ENCODE measurements at regions of chr3 and their contacts with region 1.

Region 1: DNA sequence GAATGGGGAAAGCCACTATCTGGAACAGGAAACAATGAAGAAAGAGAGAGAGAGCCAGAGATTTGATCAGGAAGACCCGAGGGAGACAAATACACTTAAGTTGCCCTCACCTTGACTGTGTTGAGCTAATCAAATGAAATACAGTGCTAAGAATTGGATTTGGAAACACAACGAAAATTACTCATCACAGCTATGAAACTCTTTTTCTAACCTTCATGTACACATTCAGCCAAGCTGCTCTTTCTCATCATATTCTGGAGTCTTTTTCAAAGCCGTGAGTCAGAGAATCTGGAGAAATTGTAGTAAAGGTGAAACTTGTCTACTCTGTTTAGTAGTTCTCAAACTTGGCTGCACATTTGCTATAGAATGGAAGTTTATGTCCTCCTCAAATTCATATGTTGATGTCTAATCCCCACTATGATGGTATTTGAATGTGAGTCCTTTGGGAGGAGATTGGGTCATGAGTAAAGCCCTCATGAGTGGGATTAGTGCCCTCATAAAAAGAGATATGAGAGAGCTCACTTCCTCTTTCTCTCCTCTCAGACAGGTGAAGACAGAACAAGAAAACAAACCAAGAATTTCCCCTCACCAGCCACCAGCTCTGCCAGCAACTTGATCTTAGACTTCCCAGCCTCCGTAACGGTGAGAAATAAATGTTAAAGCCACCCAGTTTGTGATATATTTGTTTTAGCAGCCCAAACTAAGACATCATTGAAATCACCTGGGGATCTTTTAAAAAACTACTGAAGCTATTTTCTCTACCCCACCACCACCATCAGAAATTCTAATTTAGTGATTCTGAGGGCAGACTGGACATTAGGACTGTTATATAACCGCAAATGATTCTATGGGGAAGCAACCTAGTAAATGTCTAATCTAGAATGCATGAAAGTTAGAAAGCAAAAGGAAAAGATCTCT is 143.6 kb upstream of the GRM7 start:
- DNase-seq: peak; percentile 91
- H3K4me3 ChIP-seq: peak overlapping the region; percentile 57
- H3K27ac ChIP-seq: peak overlapping the region; percentile 94
- H3K4me1 ChIP-seq: peaks cover 39% of the 10 kb centered on the region
- CTCF ChIP-seq: no peak

Region 2: GRCh38 chr3:6282918-6283317 is 434.4 kb before region 1 on chr3:
- CTCF ChIA-PET with region 1: no interaction called
- POLR2A ChIA-PET with region 1: no interaction called
- intact Hi-C with region 1: loop called (anchors 5 kb)
- DNase-seq: peak; percentile 41
- H3K4me3 ChIP-seq: no peak overlapping the region
- H3K27ac ChIP-seq: peak overlapping the region; percentile 79
- H3K4me1 ChIP-seq: peaks cover 63% of the 10 kb centered on the region
- CTCF ChIP-seq: no peak

Region 3: DNA sequence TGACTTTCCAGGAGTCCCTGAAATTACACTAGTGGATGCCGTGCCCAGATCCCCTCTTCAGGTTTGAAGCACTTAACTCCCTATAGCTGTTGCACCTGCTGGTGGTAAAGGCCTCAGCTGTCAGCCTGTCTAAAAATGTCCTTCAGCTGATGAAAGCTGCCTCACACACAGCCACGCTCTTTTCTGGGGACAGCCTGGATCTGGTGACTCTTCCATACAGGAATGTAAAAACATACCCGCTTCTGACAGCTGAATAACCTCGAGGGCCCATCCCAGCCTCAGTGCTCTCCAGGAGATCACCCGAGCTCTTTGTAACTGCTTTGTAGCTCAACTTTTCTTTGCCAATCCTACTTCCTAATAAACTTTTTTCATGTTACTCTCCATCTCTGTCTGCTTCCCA is 390.5 kb before region 1 on chr3:
- CTCF ChIA-PET with region 1: no interaction called
- POLR2A ChIA-PET with region 1: no interaction called
- intact Hi-C with region 1: no loop called
- DNase-seq: no peak
- H3K4me3 ChIP-seq: no peak overlapping the region
- H3K27ac ChIP-seq: no peak overlapping the region
- H3K4me1 ChIP-seq: no peaks in the 10 kb centered on the region
- CTCF ChIP-seq: no peak

Region 4: DNA sequence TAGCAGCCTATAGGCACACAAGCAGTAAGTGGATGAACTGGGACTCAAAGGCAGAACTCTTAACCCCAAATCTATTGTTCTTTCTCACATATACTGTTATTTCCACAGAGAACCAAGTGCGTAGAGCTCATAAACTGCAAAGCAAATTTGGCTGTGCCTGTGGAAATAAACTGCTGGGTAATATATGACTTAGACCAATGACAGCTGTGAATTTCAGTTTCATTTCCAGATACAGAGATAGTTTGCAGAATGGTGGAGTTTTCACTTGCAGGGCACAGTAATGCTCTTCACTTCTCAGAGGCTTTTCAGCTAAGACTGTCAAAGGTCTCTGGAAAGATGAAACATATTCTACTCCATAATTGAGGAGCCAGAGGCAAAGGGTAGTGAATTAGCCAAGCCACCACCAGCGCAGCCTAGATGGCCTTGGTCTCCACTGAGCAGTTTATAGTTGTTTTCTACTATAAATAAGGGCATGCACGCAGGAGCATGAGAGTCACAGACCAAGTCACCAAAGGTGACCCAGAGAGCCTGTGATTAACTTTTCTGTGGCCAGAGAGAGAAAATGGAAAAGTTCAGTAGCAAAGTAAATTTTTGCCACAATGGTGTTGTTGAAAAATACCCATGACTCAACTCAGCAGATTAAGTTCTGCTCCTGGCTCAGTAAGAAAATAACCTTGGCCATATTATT is 37.0 kb before region 1 on chr3:
- CTCF ChIA-PET with region 1: no interaction called
- POLR2A ChIA-PET with region 1: interaction called, 6 read pairs
- intact Hi-C with region 1: loop called (anchors 1 kb)
- DNase-seq: peak; percentile 77
- H3K4me3 ChIP-seq: peak overlapping the region; percentile 46
- H3K27ac ChIP-seq: peak overlapping the region; percentile 74
- H3K4me1 ChIP-seq: peaks cover 28% of the 10 kb centered on the region
- CTCF ChIP-seq: no peak

Region 5: DNA sequence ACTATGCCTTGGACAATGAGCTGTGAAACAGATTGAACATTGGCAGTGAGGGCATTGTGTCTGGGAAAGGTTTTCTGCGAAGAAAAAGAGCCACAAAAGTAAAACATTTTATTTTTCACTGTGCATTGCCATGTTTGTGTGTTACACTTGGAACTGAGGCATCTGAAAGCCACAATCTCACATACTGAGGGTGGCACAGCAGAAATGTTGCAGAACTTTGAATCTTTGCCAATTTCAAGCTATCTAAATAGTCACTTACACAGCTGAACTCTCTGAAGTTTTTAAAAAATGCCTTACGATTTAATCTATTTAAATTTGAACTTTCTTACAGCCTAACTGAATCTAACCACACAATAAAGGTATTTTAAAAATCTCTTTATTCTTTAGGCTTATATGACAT is 10.5 kb before region 1 on chr3:
- CTCF ChIA-PET with region 1: interaction called, 3 read pairs
- POLR2A ChIA-PET with region 1: interaction called, 11 read pairs
- intact Hi-C with region 1: no loop called
- DNase-seq: no peak
- H3K4me3 ChIP-seq: no peak overlapping the region
- H3K27ac ChIP-seq: no peak overlapping the region
- H3K4me1 ChIP-seq: no peaks in the 10 kb centered on the region
- CTCF ChIP-seq: no peak

Region 6: GRCh38 chr3:6799264-6799915 is 82.1 kb after region 1 on chr3:
- CTCF ChIA-PET with region 1: no interaction called
- POLR2A ChIA-PET with region 1: interaction called, 4 read pairs
- intact Hi-C with region 1: loop called (anchors 5 kb)
- DNase-seq: peak; percentile 75
- H3K4me3 ChIP-seq: no peak overlapping the region
- H3K27ac ChIP-seq: no peak overlapping the region
- H3K4me1 ChIP-seq: no peaks in the 10 kb centered on the region
- CTCF ChIP-seq: peak; percentile 94

Measured in OCI-LY7 (cell line).